Activated B cell treated with CpG ODN at 0.5 μM for 24 hours (primary cell): ENCODE measurements at regions of chr7 and their contacts with region 1.

Region 1: GRCh38 chr7:100974018-100974417 is 4.7 kb downstream of the MUC12 start:
- DNase-seq: no peak
- ATAC-seq: no peak
- H3K4me3 Mint-ChIP-seq: no peak overlapping the region
- H3K27ac Mint-ChIP-seq: no peak overlapping the region
- H3K4me1 Mint-ChIP-seq: no peaks in the 10 kb centered on the region
- H3K27me3 Mint-ChIP-seq: peaks cover 40% of the 10 kb centered on the region
- CTCF ChIP-seq: no peak

Region 2: DNA sequence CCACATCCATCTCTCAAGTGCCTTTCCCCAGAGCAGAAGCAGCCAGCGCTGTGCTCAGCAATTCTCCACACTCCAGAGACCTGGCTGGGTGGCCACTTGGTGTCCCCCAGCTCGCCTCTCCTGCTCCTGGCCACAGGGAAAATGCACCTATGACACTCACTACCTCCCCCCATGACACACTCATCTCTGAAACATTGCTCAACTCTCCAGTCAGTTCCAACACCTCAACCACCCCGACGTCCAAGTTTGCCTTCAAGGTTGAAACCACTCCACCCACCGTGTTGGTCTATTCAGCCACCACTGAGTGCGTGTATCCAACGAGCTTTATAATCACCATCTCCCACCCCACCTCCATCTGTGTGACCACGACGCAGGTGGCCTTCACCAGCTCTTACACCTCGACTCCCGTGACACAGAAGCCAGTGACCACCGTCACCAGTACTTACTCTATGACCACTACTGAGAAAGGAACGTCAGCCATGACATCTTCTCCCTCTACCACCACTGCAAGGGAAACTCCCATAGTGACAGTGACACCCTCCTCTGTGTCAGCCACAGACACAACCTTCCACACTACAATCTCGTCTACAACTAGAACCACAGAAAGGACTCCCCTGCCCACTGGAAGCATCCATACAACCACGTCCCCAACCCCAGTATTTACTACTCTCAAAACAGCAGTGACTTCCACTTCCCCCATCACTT is 22.0 kb before region 1 on chr7:
- CTCF ChIA-PET with region 1: no interaction called
- POLR2A ChIA-PET with region 1: no interaction called
- intact Hi-C with region 1: loop called (anchors 2 kb)
- DNase-seq: no peak
- ATAC-seq: no peak
- H3K4me3 Mint-ChIP-seq: no peak overlapping the region
- H3K27ac Mint-ChIP-seq: no peak overlapping the region
- H3K4me1 Mint-ChIP-seq: no peaks in the 10 kb centered on the region
- H3K27me3 Mint-ChIP-seq: peaks cover 11% of the 10 kb centered on the region
- CTCF ChIP-seq: no peak

Region 3: DNA sequence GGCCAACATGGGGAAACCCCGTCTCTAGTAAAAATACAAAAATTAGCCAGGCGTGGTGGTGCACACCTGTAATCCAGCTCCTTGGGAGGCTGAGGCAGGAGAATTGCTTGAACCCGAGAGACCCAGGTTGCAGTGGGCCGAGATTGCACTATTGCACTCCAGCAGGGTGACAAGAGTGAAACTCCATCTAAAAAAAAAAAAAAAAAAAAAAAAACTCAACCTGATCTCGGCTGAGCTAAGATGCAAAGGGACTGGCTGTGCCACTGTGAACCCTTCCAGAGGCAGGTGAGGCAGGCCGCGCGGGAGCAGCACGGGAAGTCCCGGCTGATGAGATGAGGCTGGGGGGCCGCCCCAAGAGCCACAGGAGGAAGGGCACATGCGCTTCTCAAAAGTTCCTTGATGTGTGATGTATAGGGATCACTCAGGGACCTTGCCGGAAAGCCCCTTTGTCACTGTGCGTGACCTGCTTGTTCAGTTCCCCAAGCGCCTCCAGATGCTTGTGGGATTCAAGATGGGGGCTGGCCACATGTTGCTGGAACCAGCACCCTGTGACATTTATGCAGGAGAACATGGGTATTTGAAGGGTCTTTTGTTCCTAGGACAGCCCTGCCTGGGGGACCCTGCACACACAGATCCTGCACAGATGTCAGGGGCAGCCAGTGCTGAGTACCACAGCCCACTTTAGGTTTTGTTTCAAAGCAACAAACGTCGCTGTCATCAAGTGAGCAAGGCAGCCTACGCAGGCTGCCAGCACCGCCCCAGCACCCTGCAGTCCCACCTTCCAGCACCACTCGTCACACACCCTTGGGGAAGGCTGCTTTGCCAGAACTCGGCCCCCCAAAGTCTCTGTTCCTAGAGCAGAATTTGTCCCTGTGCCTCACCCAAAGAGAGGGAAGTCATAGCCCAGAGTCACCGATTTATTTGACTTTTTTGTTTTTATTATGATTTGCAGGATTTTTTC is 1237.9 kb after region 1 on chr7:
- CTCF ChIA-PET with region 1: no interaction called
- POLR2A ChIA-PET with region 1: no interaction called
- intact Hi-C with region 1: no loop called
- DNase-seq: peak; percentile 38
- ATAC-seq: peak; percentile 89
- H3K4me3 Mint-ChIP-seq: no peak overlapping the region
- H3K27ac Mint-ChIP-seq: peak overlapping the region; percentile 82
- H3K4me1 Mint-ChIP-seq: peaks cover 17% of the 10 kb centered on the region
- H3K27me3 Mint-ChIP-seq: no peaks in the 10 kb centered on the region
- CTCF ChIP-seq: no peak